ENCODE measurements at regions of chr11 and their contacts with region 1.

Region 1: GRCh38 chr11:13668102-13668956 is at the start of gene FAR1:
- DNase-seq: peak; percentile 96 to 98 (median 97)
- H3K4me3 ChIP-seq: peak within 1 kb of the TSS; percentile 73 to 84
- H3K4me3 Mint-ChIP-seq: peak within 1 kb of the TSS; percentile 93 to 99 (median 96)
- H3K27ac ChIP-seq: peak within 1 kb of the TSS; percentile 65
- H3K27ac Mint-ChIP-seq: peak within 1 kb of the TSS; percentile 95 to 97 (median 96)
- H3K4me1 ChIP-seq: peaks cover 44% of the 10 kb centered on the region
- H3K4me1 Mint-ChIP-seq: peaks cover 35 to 50% (median 41%) of the 10 kb centered on the region in 4 donors
- H3K27me3 ChIP-seq: no peaks in the 10 kb centered on the region
- H3K27me3 Mint-ChIP-seq: peaks cover 4% of the 10 kb centered on the region in 2 donors
- total RNA-seq, gene FAR1: 34.5 to 39.7 TPM

Region 2: DNA sequence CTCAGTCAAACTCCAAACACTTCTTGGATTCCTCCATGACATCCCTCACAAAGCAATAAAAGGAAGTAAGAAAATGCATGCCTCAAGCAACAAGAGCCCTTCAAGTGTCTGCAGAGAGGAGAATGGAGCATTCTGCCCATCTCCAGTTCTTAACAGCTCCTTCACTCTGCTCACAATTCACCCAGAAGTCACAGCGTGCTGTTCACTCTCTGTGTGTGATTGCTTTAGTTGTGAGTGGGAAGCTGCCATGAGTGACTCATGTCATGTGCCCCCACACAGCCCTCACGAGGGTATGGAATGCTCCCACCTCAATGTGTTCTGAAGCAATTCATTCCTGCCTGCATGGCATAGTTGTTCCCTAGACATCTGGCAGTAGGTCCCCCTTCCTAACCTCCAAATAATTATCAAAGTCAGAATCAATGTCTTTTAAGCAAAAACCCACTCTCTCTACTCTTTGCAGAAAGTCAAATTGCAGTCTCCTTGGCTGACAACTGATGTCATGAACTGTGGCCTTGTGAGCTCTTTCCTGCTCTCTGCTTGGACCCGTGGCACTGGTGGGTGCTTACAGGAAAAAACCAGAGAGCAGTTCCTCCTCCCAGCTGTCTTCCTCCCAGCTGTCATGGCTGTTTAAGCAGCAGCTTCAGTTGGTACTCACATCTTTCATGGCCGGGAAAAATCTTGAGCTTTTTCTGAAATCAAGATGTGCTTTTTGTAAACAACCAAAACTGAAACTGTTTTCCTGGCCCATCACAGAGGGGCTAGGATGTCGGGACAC is 182.1 kb after region 1 on chr11:
- CTCF ChIA-PET with region 1: no interaction called
- POLR2A ChIA-PET with region 1: no interaction called
- intact Hi-C with region 1: no loop called
- DNase-seq: no peak
- H3K4me3 ChIP-seq: no peak overlapping the region
- H3K4me3 Mint-ChIP-seq: peak overlapping the region in 1 of 8 donors; percentile 21
- H3K27ac ChIP-seq: no peak overlapping the region
- H3K27ac Mint-ChIP-seq: peak overlapping the region in 3 of 7 donors; percentile 43 to 53 (median 49)
- H3K4me1 ChIP-seq: peaks cover 4% of the 10 kb centered on the region
- H3K4me1 Mint-ChIP-seq: peaks cover 10 to 14% (median 13%) of the 10 kb centered on the region in 4 donors
- H3K27me3 ChIP-seq: no peaks in the 10 kb centered on the region
- H3K27me3 Mint-ChIP-seq: peaks cover 6 to 9% of the 10 kb centered on the region in 2 donors

Region 3: DNA sequence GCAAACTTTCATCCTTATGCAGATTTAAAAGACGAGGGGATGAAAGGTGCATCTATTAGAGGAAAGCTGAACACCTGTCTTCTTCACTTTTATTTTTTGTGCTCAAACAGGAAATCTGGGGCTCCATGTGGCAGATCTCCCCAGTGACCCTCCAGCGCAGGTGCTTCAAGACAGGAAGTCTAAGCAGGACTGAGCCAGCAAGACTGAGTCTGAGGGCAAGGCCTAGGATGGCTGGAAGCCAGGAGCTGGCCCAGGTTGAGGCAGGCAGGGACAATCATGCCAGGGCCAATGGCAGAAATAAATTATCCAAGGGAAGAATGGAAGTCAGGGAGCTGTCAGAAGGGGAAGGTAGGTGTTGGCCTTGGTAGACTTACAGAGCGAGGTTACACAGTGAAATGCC is 193.1 kb after region 1 on chr11:
- CTCF ChIA-PET with region 1: no interaction called
- POLR2A ChIA-PET with region 1: no interaction called
- intact Hi-C with region 1: loop called (anchors 5 kb)
- DNase-seq: peak in 3 of 5 donors; percentile 16 to 25 (median 24)
- H3K4me3 ChIP-seq: no peak overlapping the region
- H3K4me3 Mint-ChIP-seq: peak overlapping the region in 7 of 8 donors; percentile 2 to 64 (median 33)
- H3K27ac ChIP-seq: no peak overlapping the region
- H3K27ac Mint-ChIP-seq: peak overlapping the region; percentile 37 to 90 (median 83)
- H3K4me1 ChIP-seq: peaks cover 23% of the 10 kb centered on the region
- H3K4me1 Mint-ChIP-seq: peaks cover 18 to 35% (median 31%) of the 10 kb centered on the region in 4 donors
- H3K27me3 ChIP-seq: no peaks in the 10 kb centered on the region
- H3K27me3 Mint-ChIP-seq: no peaks in the 10 kb centered on the region

Measured in CD4-positive, alpha-beta memory T cell (primary cell).